A549 (cell line): ENCODE measurements at regions of chr2 and their contacts with region 1.

Region 1: DNA sequence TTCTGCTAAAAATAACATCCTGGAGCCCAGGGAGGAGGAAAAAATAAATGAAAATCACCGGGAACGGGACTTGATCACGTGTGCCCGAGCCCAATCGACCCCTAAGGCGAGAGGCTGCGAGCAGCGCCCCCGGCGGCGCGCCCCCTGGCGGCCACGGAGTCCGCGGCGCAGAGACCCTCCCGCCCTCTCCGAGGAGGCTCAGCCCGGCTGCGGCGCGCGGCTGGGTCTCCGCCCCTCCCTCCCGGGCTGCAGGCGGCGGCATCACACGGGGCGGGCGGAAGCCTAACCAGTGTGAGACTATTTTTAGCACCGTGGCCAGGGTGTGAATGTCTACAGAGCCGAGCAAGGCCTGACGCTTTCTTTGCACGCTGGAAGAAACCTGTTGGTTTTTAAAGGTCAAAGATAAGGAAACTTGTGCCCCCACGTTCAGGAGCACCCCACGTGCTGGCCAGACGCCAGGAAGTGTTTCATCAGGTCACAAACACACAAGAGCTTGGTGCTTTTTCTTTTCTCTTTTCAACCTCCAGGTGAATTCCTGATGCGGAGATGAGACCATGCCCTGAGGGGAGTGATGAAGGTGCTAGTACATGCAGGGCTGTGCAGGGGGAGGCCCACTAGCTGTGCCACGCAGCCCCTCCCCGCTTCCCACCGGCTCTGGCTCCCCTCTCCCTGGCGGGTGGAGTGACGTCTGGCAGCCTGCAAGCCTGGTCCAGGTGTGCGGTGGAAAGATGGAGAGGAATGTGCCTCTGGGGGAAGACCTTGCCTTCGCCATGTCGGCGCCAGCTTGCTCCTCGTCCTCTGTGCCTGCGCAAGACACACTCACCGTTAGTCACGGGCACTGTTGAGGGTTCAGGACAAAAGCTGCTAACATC is 35.3 kb upstream of the DNMT3A start:
- DNase-seq: peak; percentile 80 to 84
- ATAC-seq: peak; percentile 92 to 98
- H3K4me3 ChIP-seq: peak overlapping the region; percentile 31
- H3K27ac ChIP-seq: peak overlapping the region; percentile 63 to 76
- H3K4me1 ChIP-seq: peaks cover 11% of the 10 kb centered on the region
- CTCF ChIP-seq: peak; percentile 100
- EP300 ChIP-seq: no peak
- POLR2A ChIP-seq: no peak
- RAD21 ChIP-seq: peak; percentile 54 to 77

Region 2: DNA sequence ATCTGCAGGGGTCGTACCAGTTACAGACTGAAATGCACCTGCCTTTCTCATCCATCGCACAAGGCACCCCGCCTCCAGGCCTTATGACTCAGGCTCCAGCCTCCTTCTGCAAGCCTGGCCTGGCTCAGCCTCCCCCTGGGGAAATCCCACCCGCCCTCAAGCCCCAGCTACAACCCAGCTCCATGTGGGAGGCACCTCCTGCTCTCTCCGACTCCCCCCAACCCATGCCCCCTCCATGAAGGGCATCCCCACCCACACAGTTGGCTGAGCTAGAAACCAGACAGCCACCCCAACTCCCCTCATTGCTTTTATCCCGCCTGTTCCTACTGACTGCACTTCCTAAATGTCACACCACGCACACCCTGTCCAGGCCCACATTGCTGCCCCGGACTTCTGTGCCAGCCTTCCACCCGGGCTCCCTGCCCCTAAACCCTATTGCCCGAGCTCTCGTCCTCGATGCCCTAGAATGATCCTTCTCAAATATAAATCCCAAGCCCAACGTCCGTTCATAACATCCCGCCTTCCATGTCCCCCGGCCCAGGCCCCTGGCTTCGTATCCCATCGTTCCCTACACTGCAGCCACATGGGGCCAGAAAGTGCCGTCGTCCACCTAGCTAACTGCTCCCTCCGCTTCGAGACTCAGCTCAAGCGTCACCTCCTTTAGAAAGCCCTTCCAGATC is 45.2 kb before region 1 on chr2:
- CTCF ChIA-PET with region 1: interaction called, 13 read pairs
- POLR2A ChIA-PET with region 1: interaction called, 4 read pairs
- DNase-seq: no peak
- ATAC-seq: no peak
- H3K4me3 ChIP-seq: no peak overlapping the region
- H3K27ac ChIP-seq: no peak overlapping the region
- H3K4me1 ChIP-seq: no peaks in the 10 kb centered on the region
- CTCF ChIP-seq: no peak
- EP300 ChIP-seq: no peak
- POLR2A ChIP-seq: no peak
- RAD21 ChIP-seq: no peak

Region 3: DNA sequence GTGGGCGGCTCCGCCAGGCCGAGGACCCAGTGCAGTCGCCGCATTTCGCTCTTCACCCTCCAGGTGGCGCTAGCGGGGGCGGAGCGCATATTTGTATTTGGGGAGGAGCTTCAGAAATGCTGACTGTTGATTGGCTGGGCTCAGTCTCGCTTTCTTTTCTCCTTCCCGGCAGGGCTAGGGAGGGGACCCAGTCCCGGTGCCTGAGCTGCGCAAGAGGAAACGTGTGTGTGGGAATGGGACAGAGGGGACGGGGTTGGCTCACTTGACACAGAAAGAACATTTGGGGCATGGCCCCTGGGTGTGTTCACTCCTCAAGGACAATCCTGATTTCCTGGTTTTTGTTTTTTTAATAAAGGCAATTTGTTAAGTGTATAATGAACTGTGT is 14.9 kb before region 1 on chr2:
- CTCF ChIA-PET with region 1: interaction called, 62 read pairs
- POLR2A ChIA-PET with region 1: interaction called, 4 read pairs
- DNase-seq: peak; percentile 94 to 98
- ATAC-seq: peak; percentile 93 to 98
- H3K4me3 ChIP-seq: peak overlapping the region; percentile 30
- H3K27ac ChIP-seq: peak overlapping the region; percentile 58 to 79
- H3K4me1 ChIP-seq: peaks cover 7% of the 10 kb centered on the region; the same call in 2 of the 3 replicates
- CTCF ChIP-seq: peak; percentile 98
- EP300 ChIP-seq: no peak
- POLR2A ChIP-seq: peak; percentile 80
- RAD21 ChIP-seq: peak; percentile 44 to 62

Region 4: GRCh38 chr2:25397777-25398176 is 20.8 kb after region 1 on chr2:
- CTCF ChIA-PET with region 1: interaction called, 19 read pairs
- POLR2A ChIA-PET with region 1: no interaction called
- DNase-seq: no peak
- ATAC-seq: peak in 1 of 2 experiments; percentile 52; a peak in 2 of 6 replicates
- H3K4me3 ChIP-seq: no peak overlapping the region
- H3K27ac ChIP-seq: no peak overlapping the region
- H3K4me1 ChIP-seq: no peaks in the 10 kb centered on the region
- CTCF ChIP-seq: no peak
- EP300 ChIP-seq: no peak
- POLR2A ChIP-seq: no peak
- RAD21 ChIP-seq: no peak

Region 5: GRCh38 chr2:25528173-25528572 is 151.2 kb after region 1 on chr2:
- CTCF ChIA-PET with region 1: interaction called, 20 read pairs
- POLR2A ChIA-PET with region 1: no interaction called
- DNase-seq: no peak
- ATAC-seq: no peak
- H3K4me3 ChIP-seq: no peak overlapping the region
- H3K27ac ChIP-seq: no peak overlapping the region
- H3K4me1 ChIP-seq: no peaks in the 10 kb centered on the region
- CTCF ChIP-seq: no peak
- EP300 ChIP-seq: no peak
- POLR2A ChIP-seq: no peak
- RAD21 ChIP-seq: no peak